Activated CD4-positive, alpha-beta T cell treated with anti-CD3 and anti-CD28 coated beads, Interleukin-2, amount 10 ng/mL, durations not matched to agents 7 days and 5 days (primary cell): ENCODE measurements at regions of chr20 and their contacts with region 1.

Region 1: DNA sequence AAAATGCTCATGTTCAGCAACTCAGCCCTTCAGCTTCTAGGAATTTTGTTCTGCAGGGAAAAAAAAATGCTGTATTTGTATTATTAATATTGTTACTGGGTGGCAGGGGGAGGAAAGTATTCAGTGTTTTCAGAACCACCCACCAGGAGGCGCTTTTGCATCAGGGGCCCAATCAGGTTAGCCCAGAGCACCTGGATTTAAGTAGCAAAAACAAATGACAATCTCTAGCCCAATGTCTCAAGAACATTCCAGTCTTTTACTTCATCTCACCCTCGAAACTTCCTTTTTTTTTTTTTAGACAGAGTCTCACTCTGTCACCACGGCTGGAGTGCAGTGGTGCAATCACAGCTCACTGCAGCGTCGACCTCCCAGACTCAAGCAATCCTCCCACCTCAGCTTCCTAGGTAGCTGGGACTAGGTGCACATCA is 635 bp upstream of the C20orf203 start:
- DNase-seq: peak; percentile 82
- H3K4me3 Mint-ChIP-seq: no peak overlapping the region
- H3K27ac Mint-ChIP-seq: peak overlapping the region; percentile 39
- H3K4me1 Mint-ChIP-seq: peaks cover 38% of the 10 kb centered on the region
- H3K27me3 Mint-ChIP-seq: no peaks in the 10 kb centered on the region

Region 2: DNA sequence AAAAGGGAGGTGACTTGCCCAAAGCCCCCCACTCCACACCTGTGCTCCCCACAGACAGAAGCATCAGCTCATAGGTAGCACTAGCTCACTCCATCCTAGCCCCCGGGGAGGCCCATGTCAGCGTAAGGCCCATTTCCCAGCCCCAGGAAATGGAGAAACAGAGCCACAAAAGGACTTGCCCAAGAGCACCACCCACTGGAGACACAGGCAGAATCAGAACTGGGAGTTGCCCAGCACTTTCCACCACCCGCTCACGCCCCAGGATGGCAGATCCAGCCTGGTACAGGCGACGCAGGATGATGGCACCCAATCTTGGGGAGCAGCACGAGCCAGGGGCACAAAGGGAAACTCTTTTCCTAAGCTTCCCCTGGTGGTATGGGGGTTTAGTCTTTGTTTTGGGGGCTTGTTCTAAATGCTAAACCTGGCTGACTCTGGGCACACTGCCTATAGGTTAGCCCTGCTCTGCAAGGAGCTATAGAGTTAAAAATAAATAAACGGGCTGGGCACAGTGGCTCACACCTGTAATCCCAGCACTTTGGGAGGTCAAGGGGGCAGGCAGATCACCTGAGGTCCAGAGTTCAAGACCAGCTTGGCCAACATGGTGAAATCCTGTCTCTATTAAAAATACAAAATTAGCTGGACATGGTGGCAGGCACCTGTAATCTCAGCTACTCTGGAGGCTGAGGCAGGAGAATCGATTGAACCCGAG is 12.4 kb before region 1 on chr20:
- CTCF ChIA-PET with region 1: interaction called, 16 read pairs
- POLR2A ChIA-PET with region 1: no interaction called
- DNase-seq: no peak
- H3K4me3 Mint-ChIP-seq: no peak overlapping the region
- H3K27ac Mint-ChIP-seq: no peak overlapping the region
- H3K4me1 Mint-ChIP-seq: peaks cover 5% of the 10 kb centered on the region
- H3K27me3 Mint-ChIP-seq: no peaks in the 10 kb centered on the region

Region 3: DNA sequence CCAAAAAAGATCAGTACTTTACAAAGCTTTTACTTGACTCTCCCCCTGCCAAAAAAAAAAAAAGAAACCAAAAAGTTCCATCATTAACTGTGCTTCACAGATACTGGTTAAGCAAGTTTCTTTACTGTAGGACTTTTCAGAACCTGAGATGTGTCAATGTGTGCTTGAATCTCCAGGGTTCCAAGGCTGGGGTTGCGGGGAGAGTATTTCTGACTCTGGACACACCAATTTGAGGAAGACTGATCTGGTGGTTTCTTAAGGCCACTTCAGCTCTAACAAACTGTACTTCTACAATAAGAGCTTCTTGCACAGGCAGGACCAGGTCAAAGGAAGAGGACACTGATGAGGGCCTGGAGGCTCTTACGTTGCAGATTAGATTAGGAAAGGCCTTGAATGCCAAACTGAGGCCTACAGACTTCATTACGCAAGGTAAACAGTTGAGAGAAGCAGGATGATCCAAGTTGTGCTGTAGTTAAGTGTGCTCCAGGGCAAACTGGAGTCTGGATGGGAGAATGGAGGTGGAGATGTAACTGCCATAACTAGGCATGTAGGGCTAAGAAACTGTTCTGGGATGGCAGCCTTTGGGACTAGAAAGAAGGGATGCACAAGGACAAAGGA is 44.5 kb after region 1 on chr20:
- CTCF ChIA-PET with region 1: no interaction called
- POLR2A ChIA-PET with region 1: no interaction called
- DNase-seq: no peak
- H3K4me3 Mint-ChIP-seq: no peak overlapping the region
- H3K27ac Mint-ChIP-seq: no peak overlapping the region
- H3K4me1 Mint-ChIP-seq: no peaks in the 10 kb centered on the region
- H3K27me3 Mint-ChIP-seq: no peaks in the 10 kb centered on the region